ENCODE measurements at regions of chr10 and their contacts with region 1.

Region 1: GRCh38 chr10:35126530-35127296 is at the start of gene CREM:
- DNase-seq: peak; percentile 96
- ATAC-seq: peak; percentile 85
- H3K4me3 Mint-ChIP-seq: peak within 1 kb of the TSS; percentile 93
- H3K27ac Mint-ChIP-seq: peak within 1 kb of the TSS; percentile 98
- H3K4me1 Mint-ChIP-seq: peaks cover 38% of the 10 kb centered on the region
- H3K27me3 Mint-ChIP-seq: no peaks in the 10 kb centered on the region
- CTCF ChIP-seq: peak; percentile 28
- total RNA-seq, gene CREM: 75.3 and 86.4 TPM in 2 replicates

Region 2: DNA sequence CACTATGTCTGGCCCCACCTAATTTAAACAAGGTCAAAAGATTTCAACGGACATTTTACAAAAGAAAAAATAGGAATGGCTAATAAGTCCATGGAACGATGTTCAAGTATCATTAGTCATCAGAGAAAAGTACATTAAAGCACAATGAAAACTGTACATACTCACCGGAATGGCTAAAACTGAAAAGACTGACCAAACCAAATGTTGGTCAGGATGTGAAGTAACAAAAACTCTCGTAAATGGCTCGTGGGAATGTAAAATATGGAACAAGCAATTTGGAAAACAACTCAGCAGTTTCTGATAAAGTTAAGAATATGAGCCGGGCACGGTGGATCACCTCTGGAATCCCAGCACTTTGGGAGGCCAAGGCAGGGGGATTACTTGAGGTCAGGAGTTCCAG is 245.9 kb before region 1 on chr10:
- CTCF ChIA-PET with region 1: no interaction called
- POLR2A ChIA-PET with region 1: no interaction called
- intact Hi-C with region 1: no loop called
- DNase-seq: no peak
- ATAC-seq: no peak
- H3K4me3 Mint-ChIP-seq: no peak overlapping the region
- H3K27ac Mint-ChIP-seq: no peak overlapping the region
- H3K4me1 Mint-ChIP-seq: no peaks in the 10 kb centered on the region
- H3K27me3 Mint-ChIP-seq: no peaks in the 10 kb centered on the region
- CTCF ChIP-seq: no peak

Region 3: DNA sequence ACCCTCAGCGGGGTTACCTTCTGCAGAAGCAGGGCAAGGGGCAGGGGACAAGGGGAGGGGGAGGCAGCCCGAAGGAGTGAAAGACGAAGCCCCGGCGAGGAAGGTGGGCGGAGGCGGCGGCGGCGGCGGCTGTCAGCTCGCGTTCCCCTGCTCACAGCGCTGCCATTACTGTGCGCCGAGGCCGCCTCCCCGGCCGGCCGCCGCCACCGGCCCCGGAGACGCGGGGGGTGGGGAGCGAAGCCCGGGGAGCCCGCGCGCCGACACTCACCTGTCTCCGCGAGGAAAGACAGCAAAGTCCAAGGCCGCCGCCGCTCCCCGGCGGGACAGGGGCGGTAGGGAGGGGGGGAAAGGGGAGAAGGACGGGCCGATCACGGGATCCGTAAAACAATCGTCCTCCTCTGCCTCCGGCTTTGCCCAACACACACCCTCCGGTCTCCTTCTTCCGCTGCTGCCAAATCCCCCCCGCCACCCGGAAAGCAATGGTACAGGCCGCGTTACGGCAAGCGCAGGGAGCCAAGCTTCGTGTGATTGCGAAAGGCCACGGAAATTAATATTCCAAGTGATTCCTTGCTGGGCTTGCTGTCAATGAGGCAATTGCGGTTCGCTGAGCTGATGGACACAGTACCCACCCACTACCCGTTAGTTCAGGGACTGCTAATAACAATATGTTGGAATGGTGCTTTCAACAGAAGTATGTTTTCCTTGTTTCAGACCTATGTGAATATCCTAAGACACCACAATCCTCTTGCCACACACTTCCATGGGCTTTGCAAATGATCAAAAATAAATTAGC is 36.4 kb before region 1 on chr10 and contains the start of gene CUL2:
- CTCF ChIA-PET with region 1: no interaction called
- POLR2A ChIA-PET with region 1: interaction called, 20 read pairs
- intact Hi-C with region 1: loop called (anchors 1 kb)
- DNase-seq: peak; percentile 89
- ATAC-seq: peak; percentile 96
- H3K4me3 Mint-ChIP-seq: peak within 1 kb of the TSS; percentile 98
- H3K27ac Mint-ChIP-seq: peak within 1 kb of the TSS; percentile 98
- H3K4me1 Mint-ChIP-seq: peaks cover 52% of the 10 kb centered on the region
- H3K27me3 Mint-ChIP-seq: peaks cover under 1% of the 10 kb centered on the region
- CTCF ChIP-seq: no peak
- total RNA-seq, gene CUL2: 32.7 and 33.7 TPM in 2 replicates

Region 4: GRCh38 chr10:35184527-35185171 is 57.9 kb after region 1 on chr10:
- CTCF ChIA-PET with region 1: no interaction called
- POLR2A ChIA-PET with region 1: interaction called, 42 read pairs
- intact Hi-C with region 1: no loop called
- DNase-seq: no peak
- ATAC-seq: peak; percentile 62
- H3K4me3 Mint-ChIP-seq: peak overlapping the region; percentile 44
- H3K27ac Mint-ChIP-seq: peak overlapping the region; percentile 71
- H3K4me1 Mint-ChIP-seq: peaks cover 27% of the 10 kb centered on the region
- H3K27me3 Mint-ChIP-seq: no peaks in the 10 kb centered on the region
- CTCF ChIP-seq: no peak

Region 5: GRCh38 chr10:35208536-35208935 is 81.8 kb after region 1 on chr10:
- CTCF ChIA-PET with region 1: interaction called, 198 read pairs
- POLR2A ChIA-PET with region 1: interaction called, 77 read pairs
- intact Hi-C with region 1: no loop called
- DNase-seq: no peak
- ATAC-seq: no peak
- H3K4me3 Mint-ChIP-seq: no peak overlapping the region
- H3K27ac Mint-ChIP-seq: peak overlapping the region; percentile 26
- H3K4me1 Mint-ChIP-seq: peaks cover 10% of the 10 kb centered on the region
- H3K27me3 Mint-ChIP-seq: no peaks in the 10 kb centered on the region
- CTCF ChIP-seq: no peak

Region 6: DNA sequence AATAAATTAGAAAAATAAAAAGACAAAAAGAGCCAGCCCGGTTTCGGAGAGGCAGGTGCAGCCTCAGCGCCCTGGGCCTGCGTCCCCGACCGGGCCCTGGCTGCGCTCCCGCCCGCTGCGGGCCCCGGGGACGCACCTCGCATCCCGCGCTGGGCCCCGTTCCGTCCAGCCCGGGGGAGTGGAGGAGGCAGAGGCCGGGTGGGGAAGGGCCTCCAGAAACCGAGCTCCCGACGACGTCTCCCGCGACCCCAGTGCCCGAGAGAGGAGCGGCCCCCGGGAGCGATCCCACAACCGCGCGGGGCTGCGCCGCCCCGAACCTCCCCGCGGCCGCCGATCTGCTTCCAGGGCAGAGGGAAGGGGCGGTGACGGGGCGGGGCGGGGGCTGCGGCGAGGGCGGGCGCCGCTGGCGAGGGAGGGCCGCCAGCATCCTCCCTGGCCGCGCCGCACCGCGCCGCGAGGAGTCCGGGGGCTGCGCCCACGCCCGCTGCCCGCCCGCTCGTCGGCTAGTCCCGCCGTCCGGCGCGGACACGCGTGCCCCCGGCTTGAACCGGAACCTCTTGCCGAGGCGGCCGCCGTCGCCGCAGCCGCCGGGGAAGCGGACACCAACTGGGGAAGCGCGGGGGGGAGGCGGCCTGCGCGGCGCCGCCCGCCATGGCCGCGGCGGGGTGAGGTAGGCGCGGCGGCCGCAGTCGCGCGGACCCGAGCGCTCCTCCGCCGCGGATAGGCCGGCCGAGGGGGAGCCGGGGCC is 209.5 kb after region 1 on chr10 and contains the start of gene CCNY:
- CTCF ChIA-PET with region 1: no interaction called
- POLR2A ChIA-PET with region 1: interaction called, 6 read pairs
- intact Hi-C with region 1: loop called (anchors 1 kb)
- DNase-seq: peak; percentile 79
- ATAC-seq: peak; percentile 86
- H3K4me3 Mint-ChIP-seq: peak within 1 kb of the TSS; percentile 88
- H3K27ac Mint-ChIP-seq: peak within 1 kb of the TSS; percentile 74
- H3K4me1 Mint-ChIP-seq: peaks cover 63% of the 10 kb centered on the region
- H3K27me3 Mint-ChIP-seq: no peaks in the 10 kb centered on the region
- CTCF ChIP-seq: no peak
- total RNA-seq, gene CCNY: 68.5 and 69.2 TPM in 2 replicates

Region 7: GRCh38 chr10:35387768-35388167 is 261.1 kb after region 1 on chr10:
- CTCF ChIA-PET with region 1: no interaction called
- POLR2A ChIA-PET with region 1: no interaction called
- intact Hi-C with region 1: no loop called
- DNase-seq: no peak
- ATAC-seq: no peak
- H3K4me3 Mint-ChIP-seq: no peak overlapping the region
- H3K27ac Mint-ChIP-seq: no peak overlapping the region
- H3K4me1 Mint-ChIP-seq: peaks cover 45% of the 10 kb centered on the region
- H3K27me3 Mint-ChIP-seq: no peaks in the 10 kb centered on the region
- CTCF ChIP-seq: no peak

Region 8: DNA sequence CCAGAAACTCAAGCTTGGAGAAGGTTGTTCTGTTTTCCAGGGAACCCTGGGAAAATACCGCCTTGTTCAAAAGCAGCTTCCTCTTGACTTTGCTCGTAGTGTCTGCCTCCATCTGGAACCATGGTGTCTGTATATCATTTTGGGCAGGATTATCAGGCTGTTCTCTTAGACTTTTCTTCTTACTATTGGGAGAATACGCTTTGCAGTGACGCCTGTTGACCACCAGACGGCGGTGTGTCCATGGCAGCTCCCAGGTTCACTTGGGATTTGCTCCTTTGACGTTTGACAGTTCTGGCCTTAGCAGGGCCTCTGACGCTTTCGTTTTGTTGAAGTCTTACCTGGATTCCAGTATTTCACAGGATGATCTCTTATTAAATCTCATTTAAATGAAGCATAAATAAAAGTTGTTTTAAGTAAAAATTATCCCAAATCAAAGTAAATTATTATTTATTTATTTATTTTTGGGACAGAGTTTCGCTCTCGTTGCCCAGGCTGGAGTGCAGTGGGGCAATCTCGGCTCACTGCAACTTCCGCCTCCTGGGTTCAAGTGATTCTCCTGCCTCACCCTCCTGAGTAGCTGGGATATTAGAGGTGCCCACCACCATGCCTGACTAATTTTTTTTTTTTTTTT is 436.7 kb after region 1 on chr10:
- CTCF ChIA-PET with region 1: no interaction called
- POLR2A ChIA-PET with region 1: no interaction called
- intact Hi-C with region 1: no loop called
- DNase-seq: no peak
- ATAC-seq: peak; percentile 61
- H3K4me3 Mint-ChIP-seq: no peak overlapping the region
- H3K27ac Mint-ChIP-seq: no peak overlapping the region
- H3K4me1 Mint-ChIP-seq: peaks cover 16% of the 10 kb centered on the region
- H3K27me3 Mint-ChIP-seq: no peaks in the 10 kb centered on the region
- CTCF ChIP-seq: peak; percentile 99

Region 9: DNA sequence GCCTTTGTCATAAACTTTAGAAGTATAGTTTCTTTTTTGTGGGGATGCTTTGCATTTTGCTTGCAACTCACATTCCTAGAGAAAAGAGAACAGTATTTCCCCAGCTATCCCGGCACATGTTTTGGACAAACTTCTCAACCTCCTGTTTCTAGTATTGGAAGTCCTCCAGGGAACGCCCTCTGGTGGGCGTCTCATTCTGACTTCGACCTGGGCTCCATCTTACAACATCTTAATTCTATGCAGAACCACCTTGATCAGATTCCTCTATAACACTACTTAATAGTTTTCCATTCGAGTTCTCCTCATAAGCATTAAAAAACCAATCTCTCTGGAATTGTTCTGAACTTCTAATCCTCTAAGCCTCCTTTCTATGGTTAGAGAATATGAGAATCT is 654.9 kb after region 1 on chr10:
- CTCF ChIA-PET with region 1: no interaction called
- POLR2A ChIA-PET with region 1: no interaction called
- intact Hi-C with region 1: loop called (anchors 10 kb)
- DNase-seq: no peak
- ATAC-seq: no peak
- H3K4me3 Mint-ChIP-seq: no peak overlapping the region
- H3K27ac Mint-ChIP-seq: no peak overlapping the region
- H3K4me1 Mint-ChIP-seq: no peaks in the 10 kb centered on the region
- H3K27me3 Mint-ChIP-seq: peaks cover 3% of the 10 kb centered on the region
- CTCF ChIP-seq: no peak

Measured in activated B cell treated with CpG ODN at 0.5 μM for 24 hours (primary cell).